ENCODE measurements at regions of chr18 and their contacts with region 1.

Region 1: GRCh38 chr18:45275367-45276113 is 339.7 kb upstream of the SLC14A2 start:
- DNase-seq: no peak
- ATAC-seq: no peak
- H3K4me3 Mint-ChIP-seq: no peak overlapping the region
- H3K27ac Mint-ChIP-seq: no peak overlapping the region
- H3K4me1 Mint-ChIP-seq: no peaks in the 10 kb centered on the region
- H3K27me3 Mint-ChIP-seq: no peaks in the 10 kb centered on the region

Region 2: DNA sequence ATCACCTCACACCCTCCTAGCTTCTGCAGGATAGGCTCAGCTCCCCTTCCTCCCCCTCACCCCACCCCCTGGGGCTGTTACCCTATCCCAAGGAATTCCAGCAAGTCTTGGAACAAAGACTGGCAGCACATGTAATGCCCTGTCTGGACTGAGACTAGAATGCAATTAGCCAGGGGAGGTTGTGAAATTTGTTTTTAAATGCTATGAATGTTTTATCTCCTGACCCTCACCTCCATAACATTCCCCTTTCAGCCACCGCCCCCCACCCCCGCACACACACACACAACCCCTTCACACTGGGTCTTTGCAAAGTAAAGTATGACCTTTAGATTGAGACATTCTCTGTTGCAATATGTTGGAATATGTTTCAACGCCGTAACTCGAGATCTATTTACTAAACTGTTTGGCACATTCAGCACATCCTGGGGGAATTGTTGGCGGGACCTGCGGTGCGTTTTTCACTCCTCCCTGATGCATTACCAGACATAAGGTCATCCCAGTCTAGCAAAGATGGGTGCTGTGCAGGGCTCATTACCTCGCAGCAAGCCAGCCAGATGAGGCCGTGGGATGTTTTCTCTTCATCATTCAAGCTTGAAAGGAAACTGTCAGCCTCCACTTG is 49.1 kb after region 1 on chr18:
- CTCF ChIA-PET with region 1: interaction called, 3 read pairs
- POLR2A ChIA-PET with region 1: no interaction called
- intact Hi-C with region 1: loop called in 1 of 2 experiments (anchors 5 kb)
- DNase-seq: no peak
- ATAC-seq: no peak
- H3K4me3 Mint-ChIP-seq: no peak overlapping the region
- H3K27ac Mint-ChIP-seq: no peak overlapping the region
- H3K4me1 Mint-ChIP-seq: no peaks in the 10 kb centered on the region
- H3K27me3 Mint-ChIP-seq: peaks cover 6% of the 10 kb centered on the region